ENCODE measurements at regions of chr14 and their contacts with region 1.

Region 1: DNA sequence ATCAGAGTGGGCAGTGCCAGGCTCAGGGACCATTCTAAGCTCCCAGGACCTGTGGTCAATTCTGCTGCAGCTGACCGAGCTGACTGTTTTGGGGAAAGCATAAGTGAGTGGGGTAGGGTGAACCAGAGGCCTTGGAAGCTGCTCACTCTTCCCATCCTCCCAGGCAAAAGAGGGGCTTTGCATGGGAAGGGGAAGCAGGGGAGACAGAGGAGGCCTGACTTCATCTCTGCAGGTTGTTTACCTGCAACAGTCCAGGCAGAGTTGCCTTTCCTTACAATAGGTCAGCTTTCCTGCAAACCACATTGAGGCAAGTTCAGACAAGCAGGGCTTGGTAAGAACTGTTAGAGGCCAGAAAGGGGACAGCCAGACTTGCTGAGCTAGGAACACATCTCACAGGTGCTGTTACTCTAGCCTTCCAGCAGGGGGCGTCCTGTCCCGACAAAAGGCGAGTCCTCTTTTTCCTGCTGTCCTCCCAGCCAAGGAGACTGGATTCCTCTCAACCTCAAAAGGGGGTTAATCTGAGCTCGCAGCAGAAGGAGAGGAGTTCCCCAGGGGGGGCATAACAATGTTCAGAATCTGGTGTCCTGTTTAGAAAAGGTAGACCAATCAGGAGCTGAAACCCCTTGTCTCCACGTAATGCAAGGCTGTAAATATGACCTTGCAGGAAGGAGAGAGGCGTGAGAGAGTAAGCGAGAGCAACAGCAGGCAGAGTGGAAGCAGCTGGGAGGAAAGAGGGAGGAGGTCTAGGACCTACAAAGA is 4.3 kb upstream of the DHRS2 start:
- DNase-seq: peak; percentile 75 to 83 (median 77)
- H3K4me3 ChIP-seq: peak overlapping the region in 6 of 7 experiments; percentile 11 to 71 (median 50)
- H3K27ac ChIP-seq: no peak overlapping the region
- H3K4me1 ChIP-seq: peaks cover 0 to 6% (median 4%) of the 10 kb centered on the region in 4 experiments
- H3K27me3 ChIP-seq: no peaks in the 10 kb centered on the region

Region 2: DNA sequence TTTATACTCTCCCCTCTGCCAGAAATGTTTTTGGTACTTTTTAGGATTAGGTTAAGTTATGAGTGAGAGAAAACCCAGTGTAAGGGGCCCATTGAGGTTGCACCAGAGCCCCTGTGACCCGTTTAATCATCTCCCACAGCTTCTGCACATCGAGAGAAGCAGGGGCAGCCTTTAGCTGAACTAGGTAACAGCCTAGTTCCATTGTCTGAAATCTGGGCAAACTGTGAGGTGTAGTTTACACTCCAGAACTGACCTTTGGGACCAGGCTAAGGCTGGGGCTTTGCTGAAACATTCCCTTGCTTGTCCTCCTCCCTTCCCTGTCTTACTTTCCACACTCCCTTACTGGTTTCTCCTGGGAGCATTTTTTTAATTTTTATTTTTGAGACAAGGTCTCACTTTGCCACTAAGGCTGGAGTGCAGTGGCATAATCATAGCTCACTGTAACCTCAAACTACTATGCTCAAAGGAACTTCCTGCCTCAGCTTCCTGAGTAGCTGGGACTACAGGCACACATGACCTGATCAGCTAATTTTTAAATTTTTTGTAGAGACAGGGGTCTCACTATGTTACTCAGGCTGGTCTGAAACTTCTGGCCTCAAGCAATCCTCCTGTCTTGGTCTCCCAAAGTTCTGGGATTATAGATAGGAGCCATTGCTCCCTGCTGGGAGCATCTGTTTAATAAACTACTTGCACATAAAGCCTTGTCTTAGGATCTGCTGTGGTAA is 21.6 kb before region 1 on chr14:
- CTCF ChIA-PET with region 1: interaction called, 39 read pairs
- POLR2A ChIA-PET with region 1: no interaction called
- DNase-seq: peak in 2 of 3 donors; percentile 48 to 70
- H3K4me3 ChIP-seq: peak overlapping the region in 2 of 7 experiments; percentile 20 to 32
- H3K27ac ChIP-seq: peak overlapping the region in 1 of 2 experiments; percentile 3
- H3K4me1 ChIP-seq: peaks cover 4 to 24% (median 18%) of the 10 kb centered on the region in 4 experiments
- H3K27me3 ChIP-seq: no peaks in the 10 kb centered on the region

Region 3: DNA sequence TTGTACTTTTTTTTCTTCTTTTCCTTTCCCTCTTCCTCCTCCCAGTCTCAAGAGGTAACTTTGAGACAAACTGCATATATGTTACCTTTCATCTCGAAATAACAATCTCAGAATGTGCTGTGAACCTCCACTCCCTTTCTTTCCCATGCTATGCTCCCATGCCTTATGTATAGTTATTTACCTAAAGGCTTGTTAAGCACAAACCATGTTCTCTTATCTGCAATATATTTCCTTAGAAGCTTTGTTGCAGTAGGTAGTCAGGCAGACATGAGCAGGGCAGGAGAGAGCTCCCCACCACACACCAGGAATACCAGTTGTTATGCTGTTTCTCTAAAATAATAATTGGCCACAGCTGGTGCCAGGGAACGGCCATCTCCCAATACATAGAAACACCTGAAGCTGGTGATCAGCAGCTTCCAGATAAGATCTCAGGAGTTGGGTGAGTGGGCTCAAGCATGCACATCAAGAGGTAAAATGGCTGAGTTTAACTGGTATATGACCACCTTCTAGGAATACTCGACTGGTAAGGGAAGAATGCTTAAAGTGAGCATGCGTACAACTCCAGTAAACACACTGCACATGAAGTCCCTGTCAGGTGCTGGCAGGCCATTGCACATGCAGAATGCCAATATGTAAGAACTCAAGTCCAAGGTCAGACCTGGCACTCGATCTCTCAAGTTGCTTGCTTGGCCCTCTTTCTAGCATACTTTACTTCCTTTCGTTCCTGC is 10.5 kb before region 1 on chr14:
- CTCF ChIA-PET with region 1: interaction called, 27 read pairs
- POLR2A ChIA-PET with region 1: no interaction called
- DNase-seq: no peak
- H3K4me3 ChIP-seq: no peak overlapping the region
- H3K27ac ChIP-seq: no peak overlapping the region
- H3K4me1 ChIP-seq: peaks cover 0 to 3% (median 0%) of the 10 kb centered on the region in 4 experiments
- H3K27me3 ChIP-seq: no peaks in the 10 kb centered on the region

Region 4: DNA sequence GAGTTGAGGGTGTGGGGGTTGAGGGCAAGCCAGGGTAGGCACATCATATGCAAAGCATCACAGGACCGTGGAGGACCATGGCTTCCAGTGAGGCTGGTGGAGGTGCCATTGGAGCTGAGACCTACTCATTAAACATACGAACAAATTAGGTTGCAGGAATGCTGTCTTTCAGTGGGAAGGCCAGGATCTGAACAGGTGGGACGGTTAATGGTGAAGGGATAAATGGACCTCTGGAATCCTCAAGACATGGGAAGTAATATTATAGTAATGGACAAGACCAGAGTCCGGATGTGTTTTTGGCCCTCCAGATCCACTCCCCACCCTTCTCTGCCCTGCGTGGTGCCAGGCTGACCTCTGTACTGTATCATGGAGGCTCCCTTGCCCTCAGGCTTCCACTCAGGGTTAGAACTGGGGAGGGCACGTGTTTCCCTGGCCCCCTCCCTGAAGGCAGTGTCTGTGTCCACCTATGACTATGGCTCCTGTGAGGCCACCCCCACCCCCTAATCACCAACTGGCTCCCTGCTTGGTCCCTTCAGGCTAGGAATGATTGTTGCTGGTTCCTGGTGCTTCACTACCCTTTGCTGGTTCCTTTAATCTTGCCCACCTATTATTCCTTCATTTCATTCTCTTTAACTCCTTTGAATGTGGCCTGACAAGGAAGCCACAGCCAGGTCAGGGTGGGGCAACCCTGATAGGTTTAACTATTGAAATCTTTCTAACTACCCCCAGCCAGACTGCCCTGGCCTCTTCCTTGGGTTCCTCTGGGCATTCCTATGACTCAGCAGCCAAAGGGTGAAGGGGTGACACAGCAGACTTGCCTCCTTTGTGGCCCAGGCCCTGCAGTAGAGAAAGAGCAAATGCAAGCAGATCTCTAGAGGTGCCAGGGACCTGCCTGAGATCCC is 15.0 kb after region 1 on chr14:
- CTCF ChIA-PET with region 1: interaction called, 28 read pairs
- POLR2A ChIA-PET with region 1: no interaction called
- DNase-seq: peak; percentile 19 to 62 (median 44)
- H3K4me3 ChIP-seq: no peak overlapping the region
- H3K27ac ChIP-seq: no peak overlapping the region
- H3K4me1 ChIP-seq: peaks cover 0 to 20% (median 3%) of the 10 kb centered on the region in 4 experiments
- H3K27me3 ChIP-seq: peaks cover 0 to 2% (median 0%) of the 10 kb centered on the region in 5 experiments

Region 5: GRCh38 chr14:23665375-23666192 is 33.7 kb after region 1 on chr14:
- CTCF ChIA-PET with region 1: interaction called, 18 read pairs
- POLR2A ChIA-PET with region 1: no interaction called
- DNase-seq: peak; percentile 47 to 70 (median 54)
- H3K4me3 ChIP-seq: no peak overlapping the region
- H3K27ac ChIP-seq: no peak overlapping the region
- H3K4me1 ChIP-seq: no peaks in the 10 kb centered on the region
- H3K27me3 ChIP-seq: peaks cover 0 to 4% (median 0%) of the 10 kb centered on the region in 5 experiments

Region 6: GRCh38 chr14:23910101-23910875 is 278.4 kb after region 1 on chr14:
- CTCF ChIA-PET with region 1: interaction called, 69 read pairs
- POLR2A ChIA-PET with region 1: interaction called, 4 read pairs
- DNase-seq: peak; percentile 20 to 46 (median 29)
- H3K4me3 ChIP-seq: no peak overlapping the region
- H3K27ac ChIP-seq: no peak overlapping the region
- H3K4me1 ChIP-seq: no peaks in the 10 kb centered on the region
- H3K27me3 ChIP-seq: no peaks in the 10 kb centered on the region

Region 7: GRCh38 chr14:23929822-23930294 is 298.0 kb after region 1 on chr14:
- CTCF ChIA-PET with region 1: interaction called, 10 read pairs
- POLR2A ChIA-PET with region 1: no interaction called
- DNase-seq: peak; percentile 78 to 88 (median 84)
- H3K4me3 ChIP-seq: no peak overlapping the region
- H3K27ac ChIP-seq: no peak overlapping the region
- H3K4me1 ChIP-seq: peaks cover 0 to 7% (median 0%) of the 10 kb centered on the region in 4 experiments
- H3K27me3 ChIP-seq: no peaks in the 10 kb centered on the region